AG04449 (cell line): ENCODE measurements at regions of chr11 and their contacts with region 1.

Region 1: GRCh38 chr11:124415356-124415923 is 9.2 kb downstream of the OR8B4 start:
- DNase-seq: peak; percentile 19
- H3K4me3 ChIP-seq: no peak overlapping the region
- CTCF ChIP-seq: peak; percentile 51

Region 2: DNA sequence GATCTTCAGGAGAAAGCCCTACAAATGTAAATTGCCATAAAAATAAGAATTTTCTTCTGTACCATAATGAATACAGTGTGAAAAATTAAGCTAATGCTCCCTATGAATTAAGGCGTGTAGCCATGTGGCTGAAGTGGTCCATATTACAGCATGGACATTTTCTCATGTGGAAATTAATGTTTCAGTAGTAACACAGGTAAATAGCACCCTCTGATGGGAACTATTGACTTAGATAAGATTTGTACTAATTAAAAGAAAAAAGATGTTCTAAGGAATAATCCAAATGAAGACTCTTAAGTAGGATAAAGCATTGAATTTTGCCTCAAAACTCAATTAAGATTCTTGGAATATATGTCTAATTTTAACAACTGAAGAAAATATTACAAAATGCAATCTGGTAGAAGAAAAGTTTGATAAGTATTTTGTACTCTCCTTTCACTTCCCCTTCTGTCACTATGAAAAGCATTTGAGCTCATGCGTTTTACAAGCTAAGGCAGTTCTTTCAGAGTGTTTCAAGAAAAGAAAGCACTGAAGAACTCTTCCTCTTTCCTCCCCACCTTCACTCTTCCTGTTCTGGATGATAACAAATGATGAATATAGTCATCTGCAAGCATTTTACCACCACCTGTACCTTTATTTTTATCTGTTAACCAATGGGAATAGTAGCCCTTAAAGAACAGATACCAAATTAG is 85.5 kb before region 1 on chr11:
- CTCF ChIA-PET with region 1: no interaction called
- POLR2A ChIA-PET with region 1: no interaction called
- DNase-seq: no peak
- H3K4me3 ChIP-seq: no peak overlapping the region
- CTCF ChIP-seq: no peak

Region 3: GRCh38 chr11:124577716-124578427 is 162.4 kb after region 1 on chr11:
- CTCF ChIA-PET with region 1: interaction called, 142 read pairs
- POLR2A ChIA-PET with region 1: no interaction called
- DNase-seq: no peak
- H3K4me3 ChIP-seq: no peak overlapping the region
- CTCF ChIP-seq: no peak

Region 4: DNA sequence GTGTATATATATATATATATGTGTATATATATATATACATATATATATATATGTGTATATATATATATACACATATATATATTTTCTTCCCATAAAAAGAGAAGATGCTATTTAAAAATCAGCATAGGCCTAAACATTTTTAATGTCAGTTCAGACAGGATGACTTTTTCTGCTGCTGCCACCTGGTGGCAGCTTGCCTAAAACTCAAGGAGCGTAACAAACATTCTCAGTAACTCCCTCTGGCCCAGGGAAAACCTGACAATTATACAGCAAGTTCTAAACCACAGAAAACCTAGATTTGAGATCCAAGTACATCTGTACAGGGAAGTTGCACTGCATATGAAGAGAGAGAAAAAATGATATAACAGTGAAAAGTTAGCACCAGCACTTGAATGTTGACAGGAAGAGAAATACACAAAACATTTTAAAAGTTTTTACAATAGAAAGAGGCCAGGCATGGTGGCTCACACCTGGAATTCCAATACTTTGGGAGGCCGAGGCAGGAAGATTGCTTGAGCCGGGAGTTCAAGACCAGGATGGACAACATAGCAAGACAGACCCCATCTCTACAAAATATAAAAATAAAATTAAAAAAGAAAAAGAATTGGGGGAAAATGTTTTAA is 170.9 kb after region 1 on chr11:
- CTCF ChIA-PET with region 1: interaction called, 142 read pairs
- POLR2A ChIA-PET with region 1: no interaction called
- DNase-seq: peak; percentile 9
- H3K4me3 ChIP-seq: no peak overlapping the region
- CTCF ChIP-seq: peak; percentile 66

Region 5: DNA sequence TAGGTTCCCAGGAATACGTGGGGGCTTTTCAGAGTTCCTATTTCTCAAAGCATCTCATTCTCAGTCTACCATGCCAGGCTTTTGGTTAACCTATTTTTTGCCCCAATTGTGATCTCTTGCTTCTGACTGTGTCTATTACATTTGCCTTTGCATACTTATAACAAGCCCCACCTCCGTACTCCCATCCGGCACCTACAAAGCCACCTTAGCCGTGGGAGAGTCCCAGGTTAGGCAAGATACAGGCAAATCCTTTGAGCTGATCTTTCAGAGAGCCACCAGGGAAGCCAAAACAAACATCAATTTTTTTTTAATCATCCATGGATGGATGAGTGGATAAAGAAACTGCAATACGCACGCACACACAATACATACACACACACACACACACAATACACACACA is 177.2 kb after region 1 on chr11:
- CTCF ChIA-PET with region 1: interaction called, 142 read pairs
- POLR2A ChIA-PET with region 1: no interaction called
- DNase-seq: no peak
- H3K4me3 ChIP-seq: no peak overlapping the region
- CTCF ChIP-seq: no peak